Naive thymus-derived CD8-positive, alpha-beta T cell (primary cell): ENCODE measurements at regions of chrX and their contacts with region 1.

Region 1: GRCh38 chrX:24395775-24396174 is 35.3 kb downstream of the SUPT20HL1 start:
- DNase-seq: peak in 9 of 10 donors; percentile 11 to 67 (median 43)
- ATAC-seq: peak; percentile 62 to 80
- H3K4me3 Mint-ChIP-seq: no peak overlapping the region
- H3K27ac Mint-ChIP-seq: peak overlapping the region in 3 of 10 donors; percentile 11 to 31 (median 13)
- H3K4me1 Mint-ChIP-seq: peaks cover 0 to 7% (median 2%) of the 10 kb centered on the region in 4 donors
- H3K27me3 Mint-ChIP-seq: peaks cover 0 to 9% (median 5%) of the 10 kb centered on the region in 5 donors

Region 2: GRCh38 chrX:24204331-24204730 is 191.4 kb before region 1 on chrX:
- POLR2A ChIA-PET with region 1: no interaction called
- DNase-seq: no peak
- ATAC-seq: no peak
- H3K4me3 Mint-ChIP-seq: no peak overlapping the region
- H3K27ac Mint-ChIP-seq: peak overlapping the region in 5 of 10 donors; percentile 18 to 82 (median 40)
- H3K4me1 Mint-ChIP-seq: peaks cover 21 to 50% (median 44%) of the 10 kb centered on the region in 4 donors
- H3K27me3 Mint-ChIP-seq: no peaks in the 10 kb centered on the region

Region 3: GRCh38 chrX:24464836-24465531 is 69.2 kb after region 1 on chrX and contains the start of gene PDK3:
- POLR2A ChIA-PET with region 1: no interaction called
- DNase-seq: peak; percentile 77 to 94 (median 88)
- ATAC-seq: peak; percentile 90 to 94
- H3K4me3 Mint-ChIP-seq: peak within 1 kb of the TSS; percentile 79 to 92 (median 84)
- H3K27ac Mint-ChIP-seq: peak within 1 kb of the TSS; percentile 82 to 97 (median 94)
- H3K4me1 Mint-ChIP-seq: peaks cover 11 to 38% (median 35%) of the 10 kb centered on the region in 4 donors
- H3K27me3 Mint-ChIP-seq: no peaks in the 10 kb centered on the region
- polyA plus RNA-seq, gene PDK3: 34.4 to 40.4 (median 39.9) TPM

Region 4: DNA sequence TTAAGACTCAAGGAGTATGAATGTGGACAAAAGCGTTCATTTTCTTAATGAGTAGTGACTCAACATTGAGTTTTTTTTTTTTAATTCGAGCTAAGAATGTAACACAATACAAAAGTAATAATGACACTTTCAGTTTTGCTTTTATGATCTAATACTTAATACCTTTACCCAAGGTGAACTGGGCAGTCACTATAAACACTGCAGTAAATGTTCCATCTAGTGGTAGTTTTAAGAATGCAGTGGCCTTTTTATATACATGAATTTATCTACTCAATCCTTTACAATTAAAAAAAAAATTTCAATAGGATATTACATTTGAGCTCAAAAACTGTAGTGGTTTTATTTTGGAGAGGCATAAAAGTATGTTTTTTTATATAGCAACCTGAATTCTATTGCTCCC is 103.2 kb after region 1 on chrX:
- POLR2A ChIA-PET with region 1: interaction called, 10 read pairs
- DNase-seq: peak in 3 of 10 donors; percentile 29 to 48 (median 37)
- ATAC-seq: peak; percentile 69 to 71
- H3K4me3 Mint-ChIP-seq: peak overlapping the region in 4 of 10 donors; percentile 10 to 41 (median 18)
- H3K27ac Mint-ChIP-seq: peak overlapping the region in 3 of 10 donors; percentile 58 to 82 (median 68)
- H3K4me1 Mint-ChIP-seq: peaks cover 2 to 33% (median 30%) of the 10 kb centered on the region in 4 donors
- H3K27me3 Mint-ChIP-seq: no peaks in the 10 kb centered on the region